Activated CD4-positive, alpha-beta memory T cell treated with anti-CD3 and anti-CD28 coated beads for 36 hours (primary cell): ENCODE measurements at regions of chr2 and their contacts with region 1.

Region 1: DNA sequence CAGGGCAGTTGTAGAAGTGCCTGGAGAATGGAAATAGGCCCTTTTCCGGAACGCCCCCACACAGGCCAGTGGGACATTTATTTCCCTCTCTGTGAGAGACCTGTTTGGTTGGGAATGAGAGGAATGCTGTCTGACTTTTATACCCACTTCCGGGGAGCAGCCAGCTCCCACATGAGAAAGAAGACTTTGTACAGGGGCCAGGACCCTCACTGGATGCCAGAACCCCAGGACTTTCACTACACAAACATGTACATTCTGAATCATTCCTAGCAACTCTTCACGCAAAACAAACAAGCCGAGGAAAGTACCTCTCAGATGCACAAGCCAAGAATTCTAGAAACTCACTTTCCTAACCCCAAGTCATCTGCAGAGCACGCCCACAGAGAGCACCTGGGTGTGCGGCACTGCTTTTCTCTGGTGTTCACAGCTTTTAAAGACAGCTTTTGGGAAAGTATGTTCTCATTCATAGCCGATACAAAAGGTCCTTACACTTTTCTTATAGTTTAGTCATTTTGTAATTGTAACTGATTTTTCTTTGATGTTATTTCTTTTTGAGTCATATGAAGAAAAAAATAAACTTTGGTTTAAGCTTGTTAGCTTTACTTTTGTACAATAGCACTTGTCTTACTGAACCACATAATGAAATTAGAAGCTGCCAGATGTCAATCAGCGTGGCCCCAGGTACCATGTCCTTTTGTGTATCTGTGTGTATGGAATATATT is 856.1 kb upstream of the ID2 start:
- DNase-seq: peak; percentile 87
- H3K4me3 Mint-ChIP-seq: no peak overlapping the region
- H3K27ac Mint-ChIP-seq: peak overlapping the region; percentile 89
- H3K4me1 Mint-ChIP-seq: peaks cover 34% of the 10 kb centered on the region
- H3K27me3 Mint-ChIP-seq: peaks cover 3% of the 10 kb centered on the region

Region 2: GRCh38 chr2:7437716-7438632 is 387.8 kb before region 1 on chr2:
- CTCF ChIA-PET with region 1: no interaction called
- POLR2A ChIA-PET with region 1: no interaction called
- intact Hi-C with region 1: loop called (anchors 2 kb)
- DNase-seq: peak; percentile 65
- H3K4me3 Mint-ChIP-seq: peak overlapping the region; percentile 29
- H3K27ac Mint-ChIP-seq: peak overlapping the region; percentile 91
- H3K4me1 Mint-ChIP-seq: peaks cover 74% of the 10 kb centered on the region
- H3K27me3 Mint-ChIP-seq: peaks cover 7% of the 10 kb centered on the region

Region 3: GRCh38 chr2:7567646-7568045 is 258.1 kb before region 1 on chr2:
- CTCF ChIA-PET with region 1: no interaction called
- POLR2A ChIA-PET with region 1: no interaction called
- intact Hi-C with region 1: loop called (anchors 1 kb)
- DNase-seq: peak; percentile 78
- H3K4me3 Mint-ChIP-seq: peak overlapping the region; percentile 23
- H3K27ac Mint-ChIP-seq: peak overlapping the region; percentile 84
- H3K4me1 Mint-ChIP-seq: peaks cover 64% of the 10 kb centered on the region
- H3K27me3 Mint-ChIP-seq: no peaks in the 10 kb centered on the region

Region 4: GRCh38 chr2:7758073-7758759 is 67.5 kb before region 1 on chr2:
- CTCF ChIA-PET with region 1: no interaction called
- POLR2A ChIA-PET with region 1: interaction called, 3 read pairs
- intact Hi-C with region 1: loop called (anchors 1 kb)
- DNase-seq: no peak
- H3K4me3 Mint-ChIP-seq: no peak overlapping the region
- H3K27ac Mint-ChIP-seq: no peak overlapping the region
- H3K4me1 Mint-ChIP-seq: peaks cover 18% of the 10 kb centered on the region
- H3K27me3 Mint-ChIP-seq: peaks cover 20% of the 10 kb centered on the region

Region 5: DNA sequence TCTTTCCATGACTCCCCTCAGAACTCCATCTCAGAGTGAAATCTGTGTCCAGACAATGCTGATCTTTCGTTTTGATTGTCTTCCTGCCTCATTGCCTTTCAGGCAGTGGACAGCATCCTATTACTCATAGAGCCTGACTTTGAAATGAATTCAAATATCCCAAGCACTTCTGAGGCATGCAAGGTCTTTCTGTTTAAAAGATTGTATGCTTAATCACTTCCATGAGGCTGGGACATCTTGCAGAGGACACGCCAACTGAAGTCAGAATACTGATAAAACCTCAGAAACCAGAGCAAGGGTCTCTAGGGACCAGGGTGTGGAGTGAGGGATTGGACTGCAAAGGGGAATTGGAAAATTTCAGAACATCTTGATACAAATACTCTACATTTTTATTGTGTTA is 19.6 kb after region 1 on chr2:
- CTCF ChIA-PET with region 1: interaction called, 6 read pairs
- POLR2A ChIA-PET with region 1: interaction called, 18 read pairs
- intact Hi-C with region 1: loop called (anchors 1 kb)
- DNase-seq: no peak
- H3K4me3 Mint-ChIP-seq: no peak overlapping the region
- H3K27ac Mint-ChIP-seq: no peak overlapping the region
- H3K4me1 Mint-ChIP-seq: peaks cover 36% of the 10 kb centered on the region
- H3K27me3 Mint-ChIP-seq: peaks cover 7% of the 10 kb centered on the region

Region 6: GRCh38 chr2:7984693-7985353 is 159.1 kb after region 1 on chr2:
- CTCF ChIA-PET with region 1: no interaction called
- POLR2A ChIA-PET with region 1: no interaction called
- intact Hi-C with region 1: loop called (anchors 1 kb)
- DNase-seq: no peak
- H3K4me3 Mint-ChIP-seq: no peak overlapping the region
- H3K27ac Mint-ChIP-seq: peak overlapping the region; percentile 66
- H3K4me1 Mint-ChIP-seq: peaks cover 28% of the 10 kb centered on the region
- H3K27me3 Mint-ChIP-seq: peaks cover 5% of the 10 kb centered on the region

Region 7: GRCh38 chr2:8488001-8488738 is 662.4 kb after region 1 on chr2:
- CTCF ChIA-PET with region 1: no interaction called
- POLR2A ChIA-PET with region 1: no interaction called
- intact Hi-C with region 1: loop called (anchors 5 kb)
- DNase-seq: peak; percentile 88
- H3K4me3 Mint-ChIP-seq: peak overlapping the region; percentile 77
- H3K27ac Mint-ChIP-seq: peak overlapping the region; percentile 91
- H3K4me1 Mint-ChIP-seq: peaks cover 72% of the 10 kb centered on the region
- H3K27me3 Mint-ChIP-seq: no peaks in the 10 kb centered on the region